Activated naive CD4-positive, alpha-beta T cell treated with anti-CD3 and anti-CD28 coated beads for 36 hours (primary cell): ENCODE measurements at regions of chr9 and their contacts with region 1.

Region 1: GRCh38 chr9:128552153-128552743 is at the start of gene SPTAN1:
- DNase-seq: peak; percentile 97
- H3K4me3 Mint-ChIP-seq: peak within 1 kb of the TSS; percentile 85
- H3K27ac Mint-ChIP-seq: peak within 1 kb of the TSS; percentile 84
- H3K4me1 Mint-ChIP-seq: peaks cover 42% of the 10 kb centered on the region
- H3K27me3 Mint-ChIP-seq: no peaks in the 10 kb centered on the region
- total RNA-seq, gene SPTAN1: 162 to 183 TPM

Region 2: GRCh38 chr9:128361986-128362646 is 190.1 kb before region 1 on chr9:
- CTCF ChIA-PET with region 1: no interaction called
- intact Hi-C with region 1: loop called (anchors 5 kb)
- DNase-seq: peak; percentile 86
- H3K4me3 Mint-ChIP-seq: peak overlapping the region; percentile 67
- H3K27ac Mint-ChIP-seq: peak overlapping the region; percentile 61
- H3K4me1 Mint-ChIP-seq: peaks cover 28% of the 10 kb centered on the region
- H3K27me3 Mint-ChIP-seq: no peaks in the 10 kb centered on the region

Region 3: GRCh38 chr9:128575469-128575868 is 23.2 kb after region 1 on chr9:
- CTCF ChIA-PET with region 1: no interaction called
- intact Hi-C with region 1: no loop called
- DNase-seq: no peak
- H3K4me3 Mint-ChIP-seq: no peak overlapping the region
- H3K27ac Mint-ChIP-seq: no peak overlapping the region
- H3K4me1 Mint-ChIP-seq: peaks cover 8% of the 10 kb centered on the region
- H3K27me3 Mint-ChIP-seq: no peaks in the 10 kb centered on the region

Region 4: DNA sequence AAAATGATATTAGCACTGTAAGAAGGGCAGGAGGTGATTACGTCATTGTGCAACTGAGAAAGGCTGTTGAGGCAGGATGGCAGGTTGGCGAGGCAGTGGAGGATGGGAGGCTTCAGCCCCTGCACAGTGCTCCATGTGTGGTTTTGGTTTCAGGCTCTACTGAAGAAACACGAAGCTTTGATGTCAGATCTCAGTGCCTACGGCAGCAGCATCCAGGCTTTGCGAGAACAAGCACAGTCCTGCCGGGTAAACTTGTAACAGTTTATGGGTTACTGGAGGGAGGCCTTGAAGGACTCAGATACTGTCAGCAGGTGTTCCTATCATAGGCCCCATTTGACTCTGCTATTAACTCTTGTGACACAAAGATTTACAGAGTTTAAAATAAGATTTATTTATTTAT is 35.2 kb after region 1 on chr9:
- CTCF ChIA-PET with region 1: interaction called, 6 read pairs
- intact Hi-C with region 1: loop called (anchors 1 kb)
- DNase-seq: peak; percentile 87
- H3K4me3 Mint-ChIP-seq: peak overlapping the region; percentile 4
- H3K27ac Mint-ChIP-seq: peak overlapping the region; percentile 91
- H3K4me1 Mint-ChIP-seq: peaks cover 19% of the 10 kb centered on the region
- H3K27me3 Mint-ChIP-seq: no peaks in the 10 kb centered on the region

Region 5: GRCh38 chr9:128786681-128787601 is 234.7 kb after region 1 on chr9 and contains the start of gene TBC1D13:
- CTCF ChIA-PET with region 1: no interaction called
- intact Hi-C with region 1: loop called (anchors 5 kb)
- DNase-seq: peak; percentile 91
- H3K4me3 Mint-ChIP-seq: peak within 1 kb of the TSS; percentile 90
- H3K27ac Mint-ChIP-seq: peak within 1 kb of the TSS; percentile 81
- H3K4me1 Mint-ChIP-seq: peaks cover 26% of the 10 kb centered on the region
- H3K27me3 Mint-ChIP-seq: no peaks in the 10 kb centered on the region
- total RNA-seq, gene TBC1D13: 8.3 to 9.0 TPM